Activated naive CD4-positive, alpha-beta T cell treated with anti-CD3 and anti-CD28 coated beads for 36 hours (primary cell): ENCODE measurements at regions of chr3 and their contacts with region 1.

Region 1: GRCh38 chr3:148991194-148992026 is at the start of gene GYG1:
- DNase-seq: peak; percentile 75
- H3K4me3 Mint-ChIP-seq: peak within 1 kb of the TSS; percentile 61
- H3K27ac Mint-ChIP-seq: peak within 1 kb of the TSS; percentile 33
- H3K4me1 Mint-ChIP-seq: peaks cover 19% of the 10 kb centered on the region
- H3K27me3 Mint-ChIP-seq: no peaks in the 10 kb centered on the region
- total RNA-seq, gene GYG1: 13.5 to 13.9 TPM

Region 2: GRCh38 chr3:148955544-148956346 is 35.7 kb before region 1 on chr3:
- CTCF ChIA-PET with region 1: no interaction called
- intact Hi-C with region 1: loop called (anchors 2 kb)
- DNase-seq: peak; percentile 32
- H3K4me3 Mint-ChIP-seq: no peak overlapping the region
- H3K27ac Mint-ChIP-seq: no peak overlapping the region
- H3K4me1 Mint-ChIP-seq: peaks cover 7% of the 10 kb centered on the region
- H3K27me3 Mint-ChIP-seq: no peaks in the 10 kb centered on the region

Region 3: DNA sequence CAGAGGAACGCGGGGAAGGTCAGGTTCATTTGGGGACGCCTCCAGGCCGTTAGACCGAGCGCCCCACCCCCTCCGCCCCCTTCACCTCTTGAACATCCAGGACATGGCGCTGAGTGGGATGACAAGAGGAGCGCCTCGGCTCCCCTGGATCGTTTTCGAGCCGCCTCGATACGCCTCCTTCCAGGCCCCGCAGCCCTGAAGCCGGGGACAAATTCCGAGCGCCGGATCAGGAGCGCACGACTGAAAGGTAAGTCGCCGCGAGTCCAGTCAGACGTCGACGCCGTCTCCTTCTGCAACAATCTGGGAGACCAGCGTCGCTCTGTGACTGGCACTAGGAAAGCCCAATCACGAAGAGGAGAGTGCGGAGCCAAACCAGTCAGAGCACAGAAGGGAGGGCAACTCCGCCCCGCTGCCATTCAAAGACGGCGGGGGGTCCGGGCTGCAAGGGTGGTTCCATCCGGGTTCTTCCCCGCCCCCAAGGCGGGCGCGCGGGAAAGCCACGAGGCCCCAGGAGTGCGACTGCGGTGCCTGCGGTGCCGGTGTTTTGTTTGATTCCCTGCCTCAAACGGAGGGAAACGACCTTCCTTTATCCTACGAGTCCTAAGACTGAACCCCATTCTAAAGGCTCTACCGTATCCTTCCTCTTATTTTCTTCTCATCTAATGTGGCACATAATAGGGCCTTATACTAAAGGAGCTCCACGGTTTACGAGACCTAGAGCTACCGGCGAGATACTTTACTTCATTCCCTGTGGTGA is 95.0 kb after region 1 on chr3 and contains the start of gene HLTF:
- CTCF ChIA-PET with region 1: no interaction called
- intact Hi-C with region 1: loop called (anchors 1 kb)
- DNase-seq: peak; percentile 94
- H3K4me3 Mint-ChIP-seq: peak within 1 kb of the TSS; percentile 95
- H3K27ac Mint-ChIP-seq: peak within 1 kb of the TSS; percentile 67
- H3K4me1 Mint-ChIP-seq: peaks cover 14% of the 10 kb centered on the region
- H3K27me3 Mint-ChIP-seq: no peaks in the 10 kb centered on the region
- total RNA-seq, gene HLTF: 22.0 to 22.6 TPM

Region 4: GRCh38 chr3:149224736-149225594 is 233.6 kb after region 1 on chr3:
- CTCF ChIA-PET with region 1: no interaction called
- intact Hi-C with region 1: loop called (anchors 2 kb)
- DNase-seq: peak; percentile 46
- H3K4me3 Mint-ChIP-seq: peak overlapping the region; percentile 62
- H3K27ac Mint-ChIP-seq: peak overlapping the region; percentile 17
- H3K4me1 Mint-ChIP-seq: peaks cover 21% of the 10 kb centered on the region
- H3K27me3 Mint-ChIP-seq: no peaks in the 10 kb centered on the region

Region 5: DNA sequence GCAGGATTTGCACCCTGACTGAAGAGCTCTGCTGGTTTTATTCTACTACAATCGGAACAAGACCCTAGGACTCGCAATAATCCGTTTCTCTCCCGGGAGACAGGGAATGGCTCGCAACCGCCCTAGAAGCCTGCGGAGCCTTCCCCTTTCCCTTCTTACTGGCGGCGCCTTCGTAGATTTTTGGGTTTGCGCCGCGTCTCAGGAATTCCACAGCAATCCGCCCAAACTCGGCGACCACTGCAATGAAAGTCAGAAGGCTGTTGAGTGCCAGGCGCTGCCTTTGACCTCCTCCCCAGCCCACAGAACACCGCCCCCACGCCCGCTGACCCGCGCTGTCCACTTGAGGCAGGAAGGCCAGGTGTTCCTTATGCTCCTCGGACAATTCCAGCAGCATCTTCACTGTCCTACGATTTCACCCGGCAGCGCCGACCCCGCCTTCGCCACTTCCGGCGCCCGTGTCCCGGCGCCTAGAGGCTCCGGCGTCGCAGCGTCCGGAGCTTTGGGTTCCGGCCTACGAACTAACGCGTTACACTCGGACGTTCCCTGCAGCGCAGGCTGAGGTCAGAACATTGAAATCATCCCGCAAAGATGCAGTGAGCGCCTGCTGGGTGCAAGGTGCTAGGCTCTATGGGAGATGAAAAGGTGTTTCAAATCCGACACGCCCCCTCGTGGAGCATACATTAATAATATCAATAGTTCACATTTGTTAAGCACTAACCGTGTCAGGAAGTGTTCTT is 760.8 kb after region 1 on chr3 and contains the start of gene COMMD2:
- CTCF ChIA-PET with region 1: no interaction called
- intact Hi-C with region 1: loop called (anchors 10 kb)
- DNase-seq: peak; percentile 89
- H3K4me3 Mint-ChIP-seq: peak within 1 kb of the TSS; percentile 96
- H3K27ac Mint-ChIP-seq: peak within 1 kb of the TSS; percentile 87
- H3K4me1 Mint-ChIP-seq: peaks cover 26% of the 10 kb centered on the region
- H3K27me3 Mint-ChIP-seq: no peaks in the 10 kb centered on the region
- total RNA-seq, gene COMMD2: 27.3 to 28.0 TPM